ENCODE measurements at regions of chr14 and their contacts with region 1.

Region 1: GRCh38 chr14:50756300-50756699 is 74.7 kb downstream of the NIN start:
- DNase-seq: no peak
- H3K4me3 ChIP-seq: no peak overlapping the region
- H3K27ac ChIP-seq: no peak overlapping the region
- H3K4me1 ChIP-seq: peaks cover 0 to 65% (median 11%) of the 10 kb centered on the region in 4 donors
- H3K27me3 ChIP-seq: no peaks in the 10 kb centered on the region
- CTCF ChIP-seq: no peak

Region 2: DNA sequence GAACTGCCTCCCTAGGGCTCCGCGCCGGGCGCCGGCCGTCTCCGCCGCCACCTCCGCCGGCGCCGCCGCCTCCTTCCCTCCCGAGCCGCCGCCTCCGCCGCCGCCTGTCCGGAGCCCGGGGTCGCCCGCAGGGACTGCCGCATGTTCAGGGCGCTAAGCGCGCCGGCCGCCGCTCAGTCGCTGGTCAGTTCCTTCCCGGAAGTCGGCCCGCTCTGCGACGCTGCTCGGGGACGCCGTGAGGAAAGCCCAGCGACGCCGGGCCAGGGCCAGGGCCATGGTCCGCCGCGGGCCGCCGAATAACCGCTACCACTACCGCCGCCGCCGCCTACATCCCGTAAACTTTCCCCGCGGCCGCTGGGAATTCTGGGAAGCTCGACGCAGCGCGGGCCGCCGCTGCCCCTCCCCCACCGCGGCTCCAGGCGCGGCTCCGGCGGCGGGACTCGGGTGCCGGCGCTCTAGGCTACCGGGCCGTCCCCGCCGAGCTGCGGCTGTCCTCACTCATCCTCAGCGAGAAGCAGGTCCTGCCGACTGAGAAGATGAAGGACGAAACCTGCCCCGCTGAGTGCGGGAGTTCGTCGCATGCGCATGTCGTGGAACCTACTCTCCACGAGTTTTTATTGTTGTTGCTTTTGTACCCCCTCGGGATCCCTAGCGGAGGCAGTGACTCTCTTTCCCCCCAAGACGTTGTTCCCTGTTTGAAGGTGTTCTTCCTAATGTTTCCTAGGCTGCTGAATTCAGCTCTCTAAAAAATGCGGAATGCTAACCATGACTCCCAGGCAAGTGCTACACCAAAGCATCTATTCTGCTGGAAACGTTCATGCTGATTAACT is 88.1 kb before region 1 on chr14 and contains the start of gene SAV1:
- intact Hi-C with region 1: loop called (anchors 5 kb)
- DNase-seq: peak; percentile 82 to 91
- H3K4me3 ChIP-seq: peak within 1 kb of the TSS; percentile 77 to 78
- H3K27ac ChIP-seq: peak within 1 kb of the TSS; percentile 95 to 98
- H3K4me1 ChIP-seq: peaks cover 0 to 36% (median 9%) of the 10 kb centered on the region in 4 donors
- H3K27me3 ChIP-seq: no peaks in the 10 kb centered on the region
- CTCF ChIP-seq: peak in 1 of 2 experiments; percentile 6

Region 3: GRCh38 chr14:50697659-50698290 is 58.5 kb before region 1 on chr14:
- intact Hi-C with region 1: no loop called
- DNase-seq: no peak
- H3K4me3 ChIP-seq: no peak overlapping the region
- H3K27ac ChIP-seq: no peak overlapping the region
- H3K4me1 ChIP-seq: no peaks in the 10 kb centered on the region
- H3K27me3 ChIP-seq: peaks cover 0 to 14% of the 10 kb centered on the region in 2 donors
- CTCF ChIP-seq: no peak

Region 4: GRCh38 chr14:50736932-50737419 is 19.3 kb before region 1 on chr14:
- intact Hi-C with region 1: no loop called
- DNase-seq: no peak
- H3K4me3 ChIP-seq: no peak overlapping the region
- H3K27ac ChIP-seq: no peak overlapping the region
- H3K4me1 ChIP-seq: peaks cover 0 to 25% (median 4%) of the 10 kb centered on the region in 4 donors
- H3K27me3 ChIP-seq: no peaks in the 10 kb centered on the region
- CTCF ChIP-seq: no peak

Measured in tibial artery (tissue), 4 donors.